AG04449 (cell line): ENCODE measurements at regions of chr1 and their contacts with region 1.

Region 1: GRCh38 chr1:112955781-112956543 is at the start of gene SLC16A1:
- DNase-seq: peak; percentile 63
- H3K4me3 ChIP-seq: peak within 1 kb of the TSS; percentile 95
- CTCF ChIP-seq: peak; percentile 51

Region 2: GRCh38 chr1:112882271-112882744 is 73.7 kb before region 1 on chr1:
- CTCF ChIA-PET with region 1: interaction called, 9 read pairs
- POLR2A ChIA-PET with region 1: interaction called, 10 read pairs
- DNase-seq: no peak
- H3K4me3 ChIP-seq: no peak overlapping the region
- CTCF ChIP-seq: no peak

Region 3: GRCh38 chr1:112935461-112936289 is 20.3 kb before region 1 on chr1:
- CTCF ChIA-PET with region 1: interaction called, 6 read pairs
- POLR2A ChIA-PET with region 1: interaction called, 15 read pairs
- DNase-seq: no peak
- H3K4me3 ChIP-seq: no peak overlapping the region
- CTCF ChIP-seq: no peak